B cell (primary cell): ENCODE measurements at regions of chr11 and their contacts with region 1.

Region 1: GRCh38 chr11:5712507-5712906 is 22.9 kb downstream of the TRIM22 start:
- DNase-seq: peak; percentile 48
- ATAC-seq: peak; percentile 39
- H3K4me3 ChIP-seq: no peak overlapping the region
- H3K4me3 Mint-ChIP-seq: no peak overlapping the region
- H3K27ac ChIP-seq: no peak overlapping the region
- H3K27ac Mint-ChIP-seq: peak overlapping the region; percentile 66
- H3K4me1 ChIP-seq: no peaks in the 10 kb centered on the region
- H3K4me1 Mint-ChIP-seq: peaks cover 6% of the 10 kb centered on the region
- H3K27me3 ChIP-seq: no peaks in the 10 kb centered on the region
- H3K27me3 Mint-ChIP-seq: no peaks in the 10 kb centered on the region
- CTCF ChIP-seq: peak; percentile 73

Region 2: GRCh38 chr11:5671841-5672240 is 40.7 kb before region 1 on chr11:
- CTCF ChIA-PET with region 1: no interaction called
- POLR2A ChIA-PET with region 1: no interaction called
- intact Hi-C with region 1: loop called (anchors 5 kb)
- DNase-seq: no peak
- ATAC-seq: no peak
- H3K4me3 ChIP-seq: no peak overlapping the region
- H3K4me3 Mint-ChIP-seq: no peak overlapping the region
- H3K27ac ChIP-seq: no peak overlapping the region
- H3K27ac Mint-ChIP-seq: no peak overlapping the region
- H3K4me1 ChIP-seq: no peaks in the 10 kb centered on the region
- H3K4me1 Mint-ChIP-seq: peaks cover 2% of the 10 kb centered on the region
- H3K27me3 ChIP-seq: no peaks in the 10 kb centered on the region
- H3K27me3 Mint-ChIP-seq: no peaks in the 10 kb centered on the region
- CTCF ChIP-seq: no peak

Region 3: DNA sequence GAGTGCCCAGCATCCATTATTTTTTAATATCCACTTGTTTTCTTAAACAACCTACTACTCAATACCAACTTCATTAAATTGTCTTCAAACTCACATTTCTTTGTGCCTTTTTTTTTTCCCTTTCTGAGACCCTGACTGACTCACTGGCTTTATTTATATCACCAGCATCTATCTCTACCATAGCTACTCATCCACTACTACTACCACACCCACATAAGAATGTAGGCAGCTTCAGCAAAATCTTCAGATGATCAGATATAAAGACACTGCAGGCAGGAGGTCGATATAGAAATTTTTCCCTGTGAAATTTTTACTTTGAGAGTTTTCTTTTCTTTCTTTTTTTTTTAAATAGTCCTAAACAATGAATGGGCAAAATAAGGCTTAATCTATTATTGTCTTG is 25.9 kb after region 1 on chr11:
- CTCF ChIA-PET with region 1: no interaction called
- POLR2A ChIA-PET with region 1: no interaction called
- intact Hi-C with region 1: no loop called
- DNase-seq: no peak
- ATAC-seq: no peak
- H3K4me3 ChIP-seq: no peak overlapping the region
- H3K4me3 Mint-ChIP-seq: no peak overlapping the region
- H3K27ac ChIP-seq: no peak overlapping the region
- H3K27ac Mint-ChIP-seq: no peak overlapping the region
- H3K4me1 ChIP-seq: no peaks in the 10 kb centered on the region
- H3K4me1 Mint-ChIP-seq: no peaks in the 10 kb centered on the region
- H3K27me3 ChIP-seq: no peaks in the 10 kb centered on the region
- H3K27me3 Mint-ChIP-seq: peaks cover 22% of the 10 kb centered on the region
- CTCF ChIP-seq: no peak